Endothelial cell of umbilical vein (primary cell): ENCODE measurements at regions of chr7 and their contacts with region 1.

Region 1: DNA sequence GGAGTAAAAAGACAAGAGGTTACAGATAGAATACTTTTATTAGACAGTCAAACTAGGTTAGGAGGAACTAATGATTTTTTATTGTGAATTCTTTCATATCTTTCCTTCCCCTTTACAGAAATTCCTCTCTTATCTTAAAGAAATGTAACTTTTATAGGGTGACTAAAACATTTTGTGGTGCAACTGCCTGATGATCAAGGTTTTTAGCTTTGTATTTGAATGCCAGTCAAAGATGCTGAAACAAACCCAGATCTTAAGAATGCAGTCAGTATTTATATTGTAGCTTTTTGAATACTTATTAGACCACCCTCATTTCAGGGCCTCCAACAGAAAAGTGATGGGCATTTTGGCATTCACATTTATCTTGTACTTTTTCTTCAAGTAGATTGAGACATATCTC is 27.4 kb downstream of the TAX1BP1 start:
- DNase-seq: no peak
- H3K4me3 ChIP-seq: no peak overlapping the region
- H3K27ac ChIP-seq: no peak overlapping the region
- H3K4me1 ChIP-seq: no peaks in the 10 kb centered on the region
- H3K27me3 ChIP-seq: no peaks in the 10 kb centered on the region
- CTCF ChIP-seq: no peak
- POLR2A ChIP-seq: no peak

Region 2: GRCh38 chr7:27551803-27552400 is 215.5 kb before region 1 on chr7:
- CTCF ChIA-PET with region 1: no interaction called
- POLR2A ChIA-PET with region 1: no interaction called
- dilution Hi-C with region 1: no loop called
- intact Hi-C with region 1: no loop called
- DNase-seq: no peak
- H3K4me3 ChIP-seq: no peak overlapping the region
- H3K27ac ChIP-seq: no peak overlapping the region
- H3K4me1 ChIP-seq: no peaks in the 10 kb centered on the region
- H3K27me3 ChIP-seq: no peaks in the 10 kb centered on the region
- CTCF ChIP-seq: no peak
- POLR2A ChIP-seq: no peak

Region 3: DNA sequence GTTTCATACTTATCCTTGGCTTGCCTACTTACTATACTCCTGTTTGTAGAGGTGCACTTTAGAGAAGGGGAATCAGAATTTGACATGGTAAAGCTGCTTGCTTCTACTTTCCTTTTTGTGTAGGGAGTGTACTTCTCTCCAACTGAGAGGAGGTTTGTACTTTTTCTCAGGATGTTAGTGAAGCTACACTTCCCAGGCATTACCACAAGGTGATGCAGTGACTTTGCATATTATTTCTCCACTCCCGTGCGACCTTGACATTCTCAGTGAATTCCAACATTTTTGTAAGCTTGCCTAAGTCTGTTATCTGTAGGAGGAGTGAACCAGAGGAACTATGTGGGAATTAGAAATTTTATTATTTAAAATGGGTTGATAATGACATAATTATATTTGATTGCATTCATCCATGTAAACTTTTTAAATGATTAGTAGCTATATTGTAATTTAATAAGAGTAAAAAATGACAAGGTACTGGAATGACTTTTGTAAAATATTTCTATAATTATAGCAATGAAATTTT is 22.2 kb before region 1 on chr7:
- CTCF ChIA-PET with region 1: interaction called, 57 read pairs
- POLR2A ChIA-PET with region 1: interaction called, 5 read pairs
- dilution Hi-C with region 1: no loop called
- intact Hi-C with region 1: no loop called
- DNase-seq: peak; percentile 85
- H3K4me3 ChIP-seq: no peak overlapping the region
- H3K27ac ChIP-seq: peak overlapping the region; percentile 49
- H3K4me1 ChIP-seq: peaks cover 11% of the 10 kb centered on the region
- H3K27me3 ChIP-seq: no peaks in the 10 kb centered on the region
- CTCF ChIP-seq: peak; percentile 54 to 65
- POLR2A ChIP-seq: no peak